Cardiac septum (tissue), 1 donor: ENCODE measurements at regions of chr15 and their contacts with region 1.

Region 1: GRCh38 chr15:74322181-74323076 is 45.0 kb downstream of the CYP11A1 start:
- DNase-seq: no peak

Region 2: DNA sequence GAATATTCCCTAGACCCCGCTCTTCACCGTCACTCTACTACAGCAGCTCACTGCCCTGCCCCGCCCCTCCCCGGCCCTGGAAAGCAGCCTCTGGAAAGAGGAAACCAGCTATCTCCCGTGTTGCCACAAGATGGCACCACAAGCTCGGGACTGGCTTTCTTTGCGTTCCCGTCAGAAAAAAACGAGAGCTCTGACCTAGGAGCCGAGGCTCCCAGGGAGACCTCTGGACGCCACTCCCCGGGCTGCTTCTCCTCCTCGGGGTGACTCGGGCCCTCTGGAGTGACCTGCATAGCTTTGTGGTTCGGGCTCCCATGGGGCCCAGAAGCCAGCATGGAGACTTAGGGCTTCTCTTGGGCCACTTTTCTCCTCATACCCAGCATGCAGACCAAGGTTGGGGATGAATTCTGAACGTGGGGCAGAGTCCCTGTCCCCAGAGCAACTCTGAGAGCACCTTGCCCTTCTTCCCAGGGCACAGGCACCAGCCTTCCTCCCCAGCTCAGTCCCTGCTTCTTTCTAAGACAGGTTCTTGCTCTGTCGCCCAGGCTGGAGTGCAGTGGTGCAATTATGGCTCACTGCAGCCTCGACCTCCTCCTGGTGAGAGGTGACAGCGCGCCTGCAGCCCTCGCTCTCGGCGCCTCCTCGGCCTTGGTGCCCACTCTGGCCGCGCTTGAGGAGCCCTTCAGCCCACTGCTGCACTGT is 349.3 kb before region 1 on chr15:
- intact Hi-C with region 1: loop called (anchors 5 kb)
- DNase-seq: peak; percentile 94

Region 3: GRCh38 chr15:74053941-74054529 is 268.4 kb before region 1 on chr15:
- intact Hi-C with region 1: loop called (anchors 5 kb)
- DNase-seq: peak; percentile 91

Region 4: DNA sequence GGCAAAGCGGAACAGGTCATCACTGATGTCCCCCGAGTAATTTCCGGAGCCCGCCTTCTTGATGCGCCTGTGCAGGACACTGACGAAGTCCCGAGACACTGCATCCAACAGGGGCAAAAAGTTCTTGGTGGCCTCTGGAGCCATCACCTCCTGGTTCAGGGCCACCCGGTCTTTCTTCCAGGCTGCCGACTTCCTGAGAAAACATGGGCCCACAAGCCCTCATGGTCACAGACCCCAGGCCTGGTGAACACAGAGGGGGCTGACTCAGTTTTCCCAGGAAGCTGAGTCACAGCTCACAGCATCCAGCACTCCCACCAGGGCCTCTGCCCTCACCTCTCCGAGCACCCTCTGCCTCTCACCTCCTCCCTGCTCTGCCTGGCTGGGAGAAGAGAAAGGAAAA is 22.6 kb after region 1 on chr15:
- intact Hi-C with region 1: no loop called
- DNase-seq: no peak